ENCODE measurements at regions of chr2 and their contacts with region 1.

Region 1: DNA sequence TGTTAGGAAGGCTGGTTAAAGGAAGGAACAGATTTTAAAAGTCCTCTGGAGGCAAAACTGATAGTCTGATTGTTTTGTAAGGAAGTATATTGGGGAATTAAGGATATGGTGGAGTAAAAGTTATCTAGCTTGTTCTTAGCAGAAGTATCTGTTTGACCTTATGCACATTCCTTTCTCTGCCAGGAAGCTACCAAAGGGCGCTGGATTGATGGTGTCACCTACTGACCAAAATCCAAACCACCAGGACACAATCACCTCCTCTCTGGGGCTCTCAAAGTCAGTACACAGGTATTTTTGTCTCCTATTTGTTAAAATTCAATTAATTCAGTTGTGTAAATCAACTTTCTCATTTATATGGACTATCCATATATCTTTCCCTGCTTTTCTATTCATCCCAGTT is 484.5 kb downstream of the NUP35 start:
- DNase-seq: no peak

Region 2: DNA sequence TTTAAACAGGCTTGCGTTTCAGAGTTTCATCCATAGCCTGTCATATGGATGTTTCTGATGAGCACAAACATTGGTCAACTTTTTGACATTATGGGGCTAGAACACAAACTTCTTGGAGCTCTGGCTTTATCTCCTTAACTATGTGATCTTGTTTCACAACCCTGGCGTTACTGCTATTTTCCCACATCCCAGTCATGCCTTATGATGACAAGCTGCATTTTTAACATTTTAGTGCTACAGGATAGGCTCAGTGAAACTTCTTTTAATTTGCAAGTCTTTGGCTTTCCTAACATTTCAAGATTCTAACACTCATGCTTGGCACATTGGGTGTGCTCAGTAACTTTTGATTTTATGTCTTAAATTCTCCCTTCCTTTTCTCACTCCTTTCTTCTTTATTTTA is 1160.9 kb before region 1 on chr2:
- intact Hi-C with region 1: no loop called
- DNase-seq: no peak

Region 3: DNA sequence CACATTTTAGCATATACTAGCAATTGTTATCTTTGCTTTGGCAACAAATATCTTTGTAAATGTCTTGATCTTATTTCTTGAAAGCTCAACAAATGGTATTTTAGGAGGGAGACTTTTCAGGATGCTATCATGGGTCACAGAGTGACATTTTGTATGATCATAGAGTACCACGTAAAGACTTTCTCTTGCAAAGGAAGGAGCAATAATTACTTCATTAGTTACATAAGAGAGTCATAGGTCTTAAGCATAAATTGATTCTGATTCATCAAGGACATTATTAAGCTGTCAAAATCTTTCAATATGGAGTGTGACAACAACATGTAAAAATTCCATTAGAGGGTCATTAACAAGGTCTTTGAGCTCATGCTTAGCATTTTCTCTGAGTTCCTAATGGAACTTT is 144.9 kb before region 1 on chr2:
- intact Hi-C with region 1: no loop called
- DNase-seq: no peak

Region 4: DNA sequence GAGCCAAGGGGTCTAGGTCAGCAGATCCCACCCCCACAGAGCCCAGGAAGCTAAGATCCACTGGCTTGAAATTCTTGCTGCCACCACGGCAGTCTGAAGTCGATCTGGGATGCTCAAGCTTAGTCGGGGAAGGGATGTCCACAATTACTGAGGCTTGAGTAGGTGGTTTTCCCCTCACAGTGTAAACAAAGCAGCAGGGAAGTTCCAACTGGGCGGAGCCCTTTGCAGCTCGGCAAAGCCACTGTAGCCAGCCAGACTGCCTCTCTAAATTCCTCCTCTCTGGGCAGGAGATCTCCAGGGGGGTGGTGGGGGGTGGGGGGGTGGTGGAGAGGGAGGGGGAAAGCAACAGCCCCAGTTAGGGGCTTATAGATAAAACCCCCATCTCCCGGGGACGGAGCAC is 65.0 kb before region 1 on chr2:
- intact Hi-C with region 1: loop called in 1 of 2 experiments (anchors 2 kb)
- DNase-seq: no peak

Region 5: GRCh38 chr2:183671233-183671632 is 62.5 kb after region 1 on chr2:
- intact Hi-C with region 1: no loop called
- DNase-seq: no peak